HepG2 (cell line): ENCODE measurements at regions of chr12 and their contacts with region 1.

Region 1: GRCh38 chr12:58346032-58346632 is 404.8 kb downstream of the ATP23 start:
- DNase-seq: peak; percentile 4
- ATAC-seq: peak; percentile 51; the same call in 1 of the 3 replicates
- H3K4me3 ChIP-seq: no peak overlapping the region
- H3K27ac ChIP-seq: no peak overlapping the region
- H3K4me1 ChIP-seq: no peaks in the 10 kb centered on the region
- H3K27me3 ChIP-seq: no peaks in the 10 kb centered on the region
- CTCF ChIP-seq: peak; percentile 62
- EP300 ChIP-seq: no peak
- POLR2A ChIP-seq: no peak
- RAD21 ChIP-seq: peak; percentile 30; the same call in 1 of the 2 replicates

Region 2: DNA sequence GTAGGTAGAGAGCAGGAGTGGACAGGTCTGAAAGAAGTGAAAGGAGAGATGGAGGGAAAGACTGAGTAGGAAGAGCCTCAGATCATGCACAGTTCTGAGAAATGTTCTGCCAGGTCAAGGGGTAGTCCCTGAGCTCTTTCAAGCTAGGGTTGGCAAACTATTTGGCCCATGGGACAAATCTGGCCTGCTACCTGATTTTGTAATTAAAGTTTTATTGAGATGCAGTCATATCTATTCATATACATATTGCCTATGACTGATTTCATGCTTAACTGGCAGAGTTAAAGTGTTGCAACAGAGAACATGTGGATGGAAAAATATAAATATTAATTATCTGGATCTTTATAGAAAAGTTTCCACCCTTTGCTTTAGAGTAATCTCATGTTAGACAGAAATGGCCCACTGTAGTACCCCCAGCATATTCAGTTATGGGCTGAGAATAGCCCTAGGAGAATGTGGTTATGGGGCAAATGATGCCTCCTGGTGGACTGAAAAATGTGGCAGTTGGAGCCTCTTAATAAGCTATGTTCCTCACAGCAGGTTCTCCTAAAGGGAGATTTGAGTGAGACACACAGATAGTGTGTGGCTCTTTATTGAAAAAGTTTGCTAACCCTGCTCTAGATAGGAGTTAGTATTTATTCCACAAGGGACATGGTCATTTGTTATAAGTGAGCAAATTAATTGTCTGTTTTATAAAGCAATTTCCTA is 97.3 kb after region 1 on chr12:
- CTCF ChIA-PET with region 1: interaction called, 28 read pairs
- POLR2A ChIA-PET with region 1: no interaction called
- in situ Hi-C with region 1: no loop called
- intact Hi-C with region 1: loop called (anchors 1 kb)
- DNase-seq: peak; percentile 28
- ATAC-seq: peak; percentile 83
- H3K4me3 ChIP-seq: no peak overlapping the region
- H3K27ac ChIP-seq: no peak overlapping the region
- H3K4me1 ChIP-seq: no peaks in the 10 kb centered on the region
- H3K27me3 ChIP-seq: no peaks in the 10 kb centered on the region
- CTCF ChIP-seq: peak; percentile 52
- EP300 ChIP-seq: no peak
- POLR2A ChIP-seq: no peak
- RAD21 ChIP-seq: no peak

Region 3: DNA sequence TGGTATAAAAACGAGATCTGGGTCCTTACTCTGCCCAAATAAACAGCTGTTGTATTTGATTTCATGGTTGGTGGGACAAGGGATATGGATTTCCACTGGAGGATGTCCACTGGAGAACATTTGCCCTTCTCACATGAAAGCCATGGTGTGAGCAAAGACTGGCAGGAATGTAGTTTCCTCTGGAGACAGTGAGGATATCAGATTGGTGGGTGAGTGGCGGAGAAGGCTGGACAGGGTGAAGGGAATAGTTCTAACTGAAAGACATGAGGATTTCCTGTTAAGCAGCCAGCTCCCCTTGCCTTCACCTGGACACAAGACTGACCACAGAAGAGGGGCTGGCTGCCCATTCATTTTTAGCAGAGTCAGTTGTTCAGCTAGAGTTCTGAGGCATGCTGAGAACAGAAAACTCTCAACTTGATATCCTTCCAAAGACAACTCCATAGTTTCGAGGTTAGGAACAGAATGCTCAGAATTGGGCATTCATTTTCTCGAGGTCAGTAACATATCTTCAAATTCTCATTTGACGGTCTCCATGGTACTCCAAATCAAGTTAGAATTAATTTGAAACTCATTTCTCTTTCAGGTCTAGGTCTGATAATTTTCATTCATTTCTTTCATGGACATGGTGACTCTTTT is 208.5 kb after region 1 on chr12:
- CTCF ChIA-PET with region 1: no interaction called
- POLR2A ChIA-PET with region 1: no interaction called
- in situ Hi-C with region 1: no loop called
- intact Hi-C with region 1: no loop called
- DNase-seq: no peak
- ATAC-seq: no peak
- H3K4me3 ChIP-seq: no peak overlapping the region
- H3K27ac ChIP-seq: no peak overlapping the region
- H3K4me1 ChIP-seq: no peaks in the 10 kb centered on the region
- H3K27me3 ChIP-seq: no peaks in the 10 kb centered on the region
- CTCF ChIP-seq: no peak
- EP300 ChIP-seq: no peak
- POLR2A ChIP-seq: no peak
- RAD21 ChIP-seq: no peak

Region 4: DNA sequence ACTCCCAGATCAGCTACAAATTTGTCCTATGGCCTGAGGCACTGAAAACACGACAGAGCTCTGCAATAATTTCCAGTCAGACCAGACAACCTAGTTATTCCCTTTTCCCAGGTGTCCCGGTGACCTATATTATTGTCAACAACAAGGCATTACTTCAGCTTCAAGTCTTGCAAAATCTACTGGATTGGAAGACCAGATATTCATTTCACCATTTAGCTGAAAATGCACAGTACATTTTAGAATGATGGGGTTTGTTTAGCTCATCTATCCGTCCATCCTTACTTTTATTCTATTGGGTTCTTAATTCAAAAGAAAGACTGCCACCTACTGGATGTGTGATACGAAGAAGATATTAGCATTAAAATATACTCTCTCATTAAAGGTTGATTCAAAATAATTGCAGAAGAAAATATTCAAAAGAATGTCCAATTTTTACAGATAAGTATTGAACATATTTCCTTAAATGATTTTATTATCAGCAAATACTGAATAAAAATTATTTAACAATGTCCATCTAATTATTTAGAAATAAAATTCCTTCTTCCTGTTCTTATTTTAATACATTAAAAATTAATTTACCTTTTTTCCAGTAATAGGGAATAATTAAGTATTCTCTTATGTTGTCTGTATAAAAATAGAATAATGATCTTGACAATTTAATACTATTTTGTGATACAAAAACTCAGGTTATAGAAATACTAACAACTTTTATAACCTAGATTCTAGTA is 819.0 kb after region 1 on chr12:
- CTCF ChIA-PET with region 1: interaction called, 8 read pairs
- POLR2A ChIA-PET with region 1: no interaction called
- in situ Hi-C with region 1: no loop called
- intact Hi-C with region 1: loop called (anchors 5 kb)
- DNase-seq: peak; percentile 13
- ATAC-seq: no peak
- H3K4me3 ChIP-seq: no peak overlapping the region
- H3K27ac ChIP-seq: no peak overlapping the region
- H3K4me1 ChIP-seq: peaks cover 10% of the 10 kb centered on the region; the same call in 1 of the 2 replicates
- H3K27me3 ChIP-seq: no peaks in the 10 kb centered on the region
- CTCF ChIP-seq: peak; percentile 18; the same call in 1 of the 2 replicates
- EP300 ChIP-seq: no peak
- POLR2A ChIP-seq: no peak
- RAD21 ChIP-seq: no peak